ENCODE measurements at regions of chr2 and their contacts with region 1.

Region 1: DNA sequence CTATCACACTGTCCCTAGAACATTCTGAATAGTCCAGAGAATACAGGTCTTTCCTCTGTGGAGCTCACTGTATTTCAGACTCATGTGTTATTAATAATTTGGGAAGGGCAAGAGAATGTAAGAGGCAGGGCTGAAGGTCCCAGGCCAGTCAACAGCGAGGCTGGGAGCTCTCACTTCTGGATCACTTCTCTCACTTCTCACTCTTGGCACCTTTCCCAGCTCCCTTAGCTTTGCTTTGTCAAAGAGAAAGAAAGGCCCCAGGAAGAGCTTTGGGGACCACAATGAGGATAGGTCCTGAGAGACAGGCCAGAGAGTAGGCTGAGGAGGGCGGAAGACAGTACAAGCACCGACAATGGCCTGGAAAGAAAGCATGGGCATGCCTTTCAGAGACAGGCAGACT is 11.2 kb downstream of the EFR3B start:
- DNase-seq: no peak
- H3K4me3 ChIP-seq: no peak overlapping the region
- H3K27ac ChIP-seq: no peak overlapping the region
- H3K27me3 ChIP-seq: peaks cover 3% of the 10 kb centered on the region
- CTCF ChIP-seq: no peak

Region 2: GRCh38 chr2:25041307-25041927 is 11.6 kb before region 1 on chr2:
- CTCF ChIA-PET with region 1: interaction called, 12 read pairs
- POLR2A ChIA-PET with region 1: interaction called, 4 read pairs
- DNase-seq: no peak
- H3K4me3 ChIP-seq: peak overlapping the region; percentile 51
- H3K27ac ChIP-seq: no peak overlapping the region
- H3K27me3 ChIP-seq: peaks cover 32% of the 10 kb centered on the region
- CTCF ChIP-seq: peak; percentile 37

Region 3: DNA sequence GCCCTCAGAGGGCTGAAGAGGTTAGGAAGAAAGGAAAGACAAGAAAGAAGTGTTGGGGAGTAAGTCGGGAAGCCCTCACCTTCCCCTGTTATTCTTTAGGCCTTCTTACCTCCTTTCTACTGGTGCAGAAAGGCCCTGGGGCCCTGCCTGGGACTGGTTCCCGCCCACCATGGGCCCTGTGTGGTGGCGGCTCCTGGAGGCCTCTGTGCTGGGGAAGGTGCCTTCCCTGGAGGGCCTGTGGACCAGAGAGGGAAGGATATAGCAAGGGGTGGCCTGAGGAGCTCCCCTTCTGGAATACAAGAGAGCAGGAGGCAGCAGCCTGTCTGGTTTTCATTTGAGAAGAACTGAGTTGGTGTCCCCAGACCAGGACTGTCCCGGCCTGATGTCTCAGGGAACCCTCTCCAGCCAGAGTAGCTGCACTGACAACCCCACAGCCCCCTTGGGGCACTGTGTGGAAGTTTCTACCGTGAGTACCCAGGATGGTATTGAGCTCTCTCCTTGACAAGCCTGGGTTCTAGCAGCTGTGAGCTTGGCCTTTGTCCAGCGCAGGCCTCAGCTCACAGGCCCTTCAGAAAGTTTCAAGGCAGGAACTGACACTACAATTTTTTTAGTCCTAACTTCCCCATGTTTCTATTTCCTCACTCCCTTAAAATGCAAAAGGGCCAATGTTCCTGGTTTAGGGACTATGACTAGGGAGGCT is 35.9 kb after region 1 on chr2:
- CTCF ChIA-PET with region 1: no interaction called
- POLR2A ChIA-PET with region 1: no interaction called
- DNase-seq: no peak
- H3K4me3 ChIP-seq: no peak overlapping the region
- H3K27ac ChIP-seq: no peak overlapping the region
- H3K27me3 ChIP-seq: peaks cover 3% of the 10 kb centered on the region
- CTCF ChIP-seq: no peak